ENCODE measurements at regions of chr11 and their contacts with region 1.

Region 1: DNA sequence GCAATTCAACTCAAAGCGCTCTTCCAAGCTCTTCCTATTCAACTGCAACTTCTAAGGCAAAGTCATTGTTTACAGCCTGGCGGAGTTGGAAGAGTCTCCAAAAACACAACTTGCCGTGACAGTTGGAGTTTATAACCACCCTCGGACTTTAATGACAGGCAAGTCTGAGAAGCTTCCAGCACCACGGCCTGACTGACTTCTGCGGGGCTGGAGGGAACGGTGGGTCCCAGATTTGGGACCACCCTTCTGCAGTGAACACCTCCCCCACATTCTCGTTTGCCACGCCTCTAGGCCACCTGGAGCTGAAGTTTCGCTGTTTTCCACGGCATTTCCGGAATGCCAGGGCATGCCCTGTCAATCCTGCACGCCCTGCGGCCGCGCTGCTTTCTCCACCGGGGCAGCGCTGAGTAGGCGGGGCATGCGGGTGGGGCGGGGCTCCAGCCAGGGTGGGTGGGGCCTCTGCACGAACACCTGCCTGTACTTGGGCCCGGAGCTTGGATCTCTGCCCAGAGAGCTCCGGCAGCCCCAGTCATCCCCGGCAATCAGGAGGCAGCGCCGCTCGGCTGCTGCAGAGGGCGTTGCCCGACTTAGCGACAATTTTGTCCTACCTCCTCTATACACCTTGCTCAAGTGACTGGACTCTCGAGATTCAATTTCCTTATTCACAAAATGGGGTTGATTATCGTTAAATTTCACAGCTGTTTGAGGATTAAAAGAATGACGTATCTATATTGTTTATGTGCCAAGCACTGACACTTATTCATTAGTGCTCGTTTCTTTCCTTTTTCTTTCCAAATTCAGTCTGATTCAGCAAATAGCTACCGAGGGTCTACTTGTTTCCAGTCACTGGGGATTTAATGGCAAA is 48.7 kb upstream of the BIRC3 start:
- DNase-seq: peak; percentile 97

Region 2: GRCh38 chr11:101848262-101848661 is 420.3 kb before region 1 on chr11:
- CTCF ChIA-PET with region 1: no interaction called
- POLR2A ChIA-PET with region 1: no interaction called
- DNase-seq: no peak

Region 3: GRCh38 chr11:102254045-102254444 is 14.5 kb before region 1 on chr11:
- CTCF ChIA-PET with region 1: interaction called, 10 read pairs
- POLR2A ChIA-PET with region 1: no interaction called
- DNase-seq: peak; percentile 56

Region 4: DNA sequence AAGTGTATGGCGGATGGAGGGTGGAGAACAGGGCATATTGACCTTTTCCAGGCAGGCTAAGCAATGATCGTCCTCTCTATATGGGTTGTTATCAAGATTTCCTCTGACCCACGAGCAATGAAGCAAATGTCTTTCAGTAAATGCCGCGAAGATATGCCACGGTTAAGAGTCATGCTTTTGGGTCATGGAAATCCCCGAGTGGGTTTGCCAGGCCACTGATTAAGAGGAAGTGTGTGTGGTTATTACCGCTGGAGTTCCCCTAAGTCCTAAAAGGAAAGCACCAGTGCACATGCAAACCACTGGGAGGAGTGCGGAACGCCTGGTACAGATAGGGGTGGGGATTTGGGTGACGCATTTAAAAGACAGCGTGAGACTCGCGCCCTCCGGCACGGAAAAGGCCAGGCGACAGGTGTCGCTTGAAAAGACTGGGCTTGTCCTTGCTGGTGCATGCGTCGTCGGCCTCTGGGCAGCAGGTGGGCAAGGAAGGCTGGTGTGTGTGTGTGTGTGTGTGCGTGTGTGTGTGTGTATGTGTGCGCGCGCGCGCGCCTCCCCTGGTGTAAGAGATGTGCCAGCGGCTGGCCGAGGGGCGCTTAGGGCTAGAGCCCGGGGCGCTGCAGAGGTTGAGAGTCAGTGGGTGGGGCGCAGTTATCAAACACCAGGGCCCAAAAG is 48.7 kb after region 1 on chr11 and contains the start of gene BIRC3:
- CTCF ChIA-PET with region 1: no interaction called
- POLR2A ChIA-PET with region 1: no interaction called
- DNase-seq: peak; percentile 52

Measured in HEK293T (cell line).